PC-9 (cell line): ENCODE measurements at regions of chr9 and their contacts with region 1.

Region 1: DNA sequence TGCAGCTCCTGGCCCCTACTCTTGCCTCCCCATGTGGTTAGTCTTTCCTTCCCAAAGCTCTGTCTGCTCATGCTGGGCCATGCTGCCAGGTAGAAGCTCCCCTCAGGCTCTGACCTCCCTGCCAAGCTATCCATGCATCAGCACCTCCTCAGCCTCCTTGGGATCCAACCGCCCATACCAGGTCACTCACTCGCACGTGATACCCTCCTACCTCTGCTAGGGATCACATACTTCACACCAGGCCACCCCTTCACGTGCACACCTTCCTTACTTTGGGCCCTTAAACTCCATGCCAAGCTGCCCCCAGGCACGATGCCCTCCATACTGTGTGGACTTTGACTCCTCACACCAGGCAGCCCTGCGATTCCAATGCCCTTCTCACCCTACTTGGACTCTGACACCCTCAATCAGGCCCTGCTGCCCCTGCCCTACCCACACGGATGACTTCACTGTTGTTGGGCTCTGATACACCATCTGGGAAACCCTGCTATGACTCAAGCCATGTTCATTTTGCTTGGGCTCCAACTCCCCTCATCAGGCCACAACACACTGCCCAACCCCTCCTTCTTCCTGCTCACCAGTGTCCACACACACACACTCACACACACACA is 34.1 kb downstream of the ZNF483 start:
- DNase-seq: peak; percentile 35 to 37
- H3K4me3 ChIP-seq: no peak overlapping the region
- H3K27ac ChIP-seq: no peak overlapping the region
- H3K4me1 ChIP-seq: no peaks in the 10 kb centered on the region
- H3K27me3 ChIP-seq: no peaks in the 10 kb centered on the region
- CTCF ChIP-seq: no peak

Region 2: GRCh38 chr9:110650991-110651411 is 908.1 kb before region 1 on chr9:
- CTCF ChIA-PET with region 1: no interaction called
- POLR2A ChIA-PET with region 1: interaction called, 19 read pairs
- intact Hi-C with region 1: no loop called
- DNase-seq: no peak
- H3K4me3 ChIP-seq: no peak overlapping the region
- H3K27ac ChIP-seq: no peak overlapping the region
- H3K4me1 ChIP-seq: no peaks in the 10 kb centered on the region
- H3K27me3 ChIP-seq: no peaks in the 10 kb centered on the region
- CTCF ChIP-seq: no peak

Region 3: GRCh38 chr9:111474385-111474784 is 84.7 kb before region 1 on chr9:
- CTCF ChIA-PET with region 1: interaction called, 4 read pairs
- POLR2A ChIA-PET with region 1: interaction called, 12 read pairs
- intact Hi-C with region 1: no loop called
- DNase-seq: no peak
- H3K4me3 ChIP-seq: no peak overlapping the region
- H3K27ac ChIP-seq: no peak overlapping the region
- H3K4me1 ChIP-seq: no peaks in the 10 kb centered on the region
- H3K27me3 ChIP-seq: no peaks in the 10 kb centered on the region
- CTCF ChIP-seq: no peak

Region 4: DNA sequence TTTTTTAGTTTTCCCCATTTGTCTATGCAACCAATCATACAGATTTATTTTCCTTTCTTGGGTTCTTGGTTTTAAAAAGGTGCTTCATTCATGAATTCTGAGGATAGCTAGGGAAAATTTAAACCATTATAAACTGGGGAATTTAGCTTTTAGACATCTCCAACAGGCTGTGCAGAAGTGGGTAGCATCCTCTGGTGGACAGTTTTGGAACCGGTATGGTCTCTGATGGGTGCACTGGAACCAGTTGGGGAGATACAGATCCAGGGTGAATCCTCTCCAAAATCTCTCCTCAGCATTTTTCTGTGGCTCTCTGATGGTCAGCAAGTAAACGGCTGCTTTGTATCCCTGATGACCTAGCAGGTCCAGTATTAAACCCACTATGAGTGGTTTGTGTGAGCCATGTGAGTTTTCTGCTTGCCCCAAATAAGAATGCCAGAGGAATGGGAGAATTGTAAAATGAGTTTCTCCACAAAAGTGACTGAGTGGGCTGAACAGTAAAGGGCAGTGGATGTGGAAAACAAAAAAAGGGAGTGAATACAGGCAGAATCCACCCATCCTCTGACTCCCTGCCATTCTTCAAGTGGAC is 62.9 kb after region 1 on chr9:
- CTCF ChIA-PET with region 1: no interaction called
- POLR2A ChIA-PET with region 1: no interaction called
- intact Hi-C with region 1: no loop called
- DNase-seq: peak in 1 of 2 experiments; percentile 26
- H3K4me3 ChIP-seq: no peak overlapping the region
- H3K27ac ChIP-seq: peak overlapping the region; percentile 73
- H3K4me1 ChIP-seq: peaks cover 32% of the 10 kb centered on the region
- H3K27me3 ChIP-seq: no peaks in the 10 kb centered on the region
- CTCF ChIP-seq: peak; percentile 68